Mammary epithelial cell (primary cell): ENCODE measurements at regions of chr9 and their contacts with region 1.

Region 1: GRCh38 chr9:137086531-137087408 is at the start of gene MAN1B1:
- DNase-seq: peak; percentile 100
- H3K4me3 ChIP-seq: peak within 1 kb of the TSS; percentile 83 to 85 (median 85)
- H3K27ac ChIP-seq: peak within 1 kb of the TSS; percentile 83
- H3K4me1 ChIP-seq: peaks cover 46% of the 10 kb centered on the region
- H3K27me3 ChIP-seq: no peaks in the 10 kb centered on the region
- CTCF ChIP-seq: no peak
- total RNA-seq, gene MAN1B1: 62.3 to 67.0 TPM

Region 2: GRCh38 chr9:137070201-137070905 is 16.4 kb before region 1 on chr9 and contains the start of gene SAPCD2:
- CTCF ChIA-PET with region 1: interaction called, 5 read pairs
- dilution Hi-C with region 1: no loop called
- in situ Hi-C with region 1: no loop called
- intact Hi-C with region 1: loop called (anchors 1 kb)
- DNase-seq: peak; percentile 85
- H3K4me3 ChIP-seq: peak within 1 kb of the TSS; percentile 22 to 52 (median 47)
- H3K27ac ChIP-seq: no peak within 1 kb of the TSS
- H3K4me1 ChIP-seq: peaks cover 21% of the 10 kb centered on the region
- H3K27me3 ChIP-seq: no peaks in the 10 kb centered on the region
- CTCF ChIP-seq: no peak
- total RNA-seq, gene SAPCD2: 1.0 to 6.9 TPM

Region 3: DNA sequence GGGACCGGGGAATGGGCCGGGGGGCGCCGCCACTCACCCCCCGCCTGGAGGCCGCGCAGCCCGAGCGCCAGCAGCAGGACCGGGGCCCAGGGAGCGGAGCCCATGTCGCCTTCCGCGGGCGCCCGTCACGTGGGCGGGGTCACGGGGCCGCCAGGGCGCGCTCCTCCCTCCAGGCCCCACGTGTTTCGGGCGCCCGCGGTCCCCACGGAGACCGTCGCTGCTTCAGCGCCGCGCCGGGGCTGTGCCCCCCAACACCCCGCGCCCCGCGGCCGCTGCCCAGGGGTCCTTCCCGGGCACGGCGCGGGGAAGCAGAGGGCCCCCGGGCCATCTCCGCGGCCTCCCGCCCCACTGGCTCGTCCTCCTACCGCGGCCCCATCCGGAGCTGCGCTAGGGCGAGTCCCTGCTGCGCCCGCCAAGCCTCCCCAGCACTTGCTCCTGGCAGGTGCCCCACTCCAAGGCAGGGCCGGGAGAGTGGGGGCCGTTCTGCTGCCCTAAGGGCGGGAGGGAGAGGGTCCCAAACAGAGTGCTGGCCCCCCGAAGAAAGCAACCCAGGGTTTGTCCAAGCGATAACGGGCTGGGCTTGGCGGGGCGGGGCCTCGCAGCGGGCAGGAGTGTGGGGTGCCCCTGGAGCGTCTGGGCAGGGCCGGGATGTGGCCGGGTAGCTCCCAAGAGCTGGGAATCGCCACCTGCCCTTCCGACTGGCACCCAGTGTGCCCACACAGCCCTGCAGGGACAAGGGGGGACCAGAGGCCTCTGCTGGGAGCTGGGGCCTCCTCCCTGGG is 28.0 kb after region 1 on chr9 and contains the start of gene DPP7:
- CTCF ChIA-PET with region 1: interaction called, 5 read pairs
- dilution Hi-C with region 1: no loop called
- in situ Hi-C with region 1: no loop called
- intact Hi-C with region 1: loop called (anchors 1 kb)
- DNase-seq: peak; percentile 30
- H3K4me3 ChIP-seq: peak within 1 kb of the TSS; percentile 56 to 68 (median 58)
- H3K27ac ChIP-seq: no peak within 1 kb of the TSS
- H3K4me1 ChIP-seq: peaks cover 5% of the 10 kb centered on the region
- H3K27me3 ChIP-seq: no peaks in the 10 kb centered on the region
- CTCF ChIP-seq: no peak
- total RNA-seq, gene DPP7: 52.3 to 80.7 TPM